A673 (cell line): ENCODE measurements at regions of chr20 and their contacts with region 1.

Region 1: DNA sequence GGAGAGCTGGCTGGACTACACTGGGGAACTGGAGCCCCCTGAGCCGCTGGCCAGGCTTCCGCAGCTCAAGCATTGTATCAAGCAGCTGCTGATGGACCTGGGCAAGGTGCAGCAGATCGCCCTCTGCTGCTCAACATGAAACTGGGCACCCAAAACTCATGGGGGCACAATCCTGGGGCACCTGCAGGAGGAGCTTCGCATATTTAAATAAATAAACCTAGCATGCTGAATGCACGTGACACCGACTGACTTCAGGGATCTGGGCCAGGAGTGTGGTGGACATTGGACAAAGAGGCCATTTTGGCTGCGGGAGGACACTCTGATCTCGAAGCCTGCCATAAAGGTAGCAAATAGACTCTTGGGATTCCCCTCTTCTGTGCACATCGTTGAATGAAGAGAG is 6.8 kb downstream of the SCAND1 start:
- DNase-seq: peak; percentile 55
- H3K4me3 ChIP-seq: no peak overlapping the region
- H3K27ac ChIP-seq: no peak overlapping the region
- H3K4me1 ChIP-seq: peaks cover 3% of the 10 kb centered on the region
- H3K27me3 ChIP-seq: no peaks in the 10 kb centered on the region
- CTCF ChIP-seq: peak; percentile 61

Region 2: GRCh38 chr20:35680452-35681183 is 266.9 kb before region 1 on chr20:
- CTCF ChIA-PET with region 1: interaction called, 7 read pairs
- POLR2A ChIA-PET with region 1: interaction called, 16 read pairs
- intact Hi-C with region 1: no loop called
- DNase-seq: no peak
- H3K4me3 ChIP-seq: no peak overlapping the region
- H3K27ac ChIP-seq: no peak overlapping the region
- H3K4me1 ChIP-seq: no peaks in the 10 kb centered on the region
- H3K27me3 ChIP-seq: no peaks in the 10 kb centered on the region
- CTCF ChIP-seq: no peak

Region 3: GRCh38 chr20:35871311-35871771 is 76.1 kb before region 1 on chr20:
- CTCF ChIA-PET with region 1: no interaction called
- POLR2A ChIA-PET with region 1: no interaction called
- intact Hi-C with region 1: no loop called
- DNase-seq: peak; percentile 54
- H3K4me3 ChIP-seq: peak overlapping the region; percentile 12
- H3K27ac ChIP-seq: peak overlapping the region; percentile 76
- H3K4me1 ChIP-seq: peaks cover 18% of the 10 kb centered on the region
- H3K27me3 ChIP-seq: no peaks in the 10 kb centered on the region
- CTCF ChIP-seq: no peak

Region 4: DNA sequence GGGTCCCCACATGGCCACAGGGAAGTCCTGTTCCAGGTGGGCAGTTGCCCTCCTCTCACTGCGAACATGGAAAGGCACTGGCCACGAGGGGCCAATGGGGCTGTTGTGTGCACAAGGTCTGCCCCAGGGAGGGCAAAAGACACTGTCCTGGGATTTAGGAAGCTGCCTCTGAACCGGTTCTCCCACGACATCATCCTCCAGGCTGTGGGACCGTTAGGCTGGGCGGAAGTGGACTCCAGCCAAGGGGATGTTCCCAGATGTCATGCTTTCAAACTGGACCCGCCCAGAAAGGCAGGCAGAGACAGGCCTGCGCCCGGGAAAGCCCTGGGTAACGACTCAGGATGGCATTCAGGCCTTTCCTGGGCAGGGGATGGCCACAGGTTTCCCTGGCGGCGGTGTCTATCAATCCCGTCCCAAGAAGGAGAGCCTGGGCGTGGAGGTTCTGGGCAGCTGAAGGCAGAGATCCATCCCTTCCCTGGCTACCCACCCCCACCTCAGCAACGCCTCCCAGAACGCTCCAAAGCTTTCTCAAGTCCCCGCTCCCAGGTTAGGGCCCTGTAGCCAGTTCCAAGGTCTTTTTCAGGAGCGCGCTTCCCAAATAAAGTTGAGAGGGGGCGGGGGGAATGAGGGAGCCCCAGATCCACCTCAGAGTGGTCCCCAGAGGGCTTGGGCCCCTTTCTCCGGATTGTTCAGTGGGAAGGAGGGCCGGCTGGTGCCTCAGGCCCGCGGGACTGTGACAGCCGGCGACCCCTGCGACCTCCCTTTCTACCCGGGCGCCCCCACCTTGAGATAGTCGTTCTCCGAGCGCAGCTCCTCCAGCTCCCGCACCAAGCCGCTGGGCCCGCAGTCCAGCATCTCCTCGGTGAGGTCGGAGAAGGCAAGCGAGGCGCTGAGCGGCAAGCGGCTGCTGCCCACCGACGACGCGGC is 914.6 kb after region 1 on chr20:
- CTCF ChIA-PET with region 1: no interaction called
- POLR2A ChIA-PET with region 1: no interaction called
- intact Hi-C with region 1: no loop called
- DNase-seq: peak; percentile 81
- H3K4me3 ChIP-seq: peak overlapping the region; percentile 59
- H3K27ac ChIP-seq: peak overlapping the region; percentile 72
- H3K4me1 ChIP-seq: peaks cover 16% of the 10 kb centered on the region
- H3K27me3 ChIP-seq: no peaks in the 10 kb centered on the region
- CTCF ChIP-seq: no peak

Region 5: DNA sequence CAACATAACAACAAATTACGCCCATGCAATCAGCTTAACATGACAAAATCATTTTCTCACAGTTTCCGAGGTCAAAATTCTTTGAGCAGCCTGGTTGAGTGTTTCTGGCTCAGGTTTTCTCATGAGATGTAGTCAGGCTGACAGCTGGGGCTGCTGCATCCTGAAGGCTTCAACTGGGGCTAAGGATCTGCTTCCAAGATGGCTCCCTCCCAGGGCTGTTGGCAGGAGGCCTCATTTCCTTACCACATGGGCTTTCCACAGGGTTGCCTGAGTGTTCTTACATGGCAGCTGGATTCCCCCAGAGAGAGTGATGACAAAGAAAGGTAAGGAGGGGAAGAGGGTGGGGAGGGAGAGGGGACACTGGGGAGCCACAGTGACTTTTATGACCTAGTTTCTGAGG is 1510.4 kb after region 1 on chr20:
- CTCF ChIA-PET with region 1: no interaction called
- POLR2A ChIA-PET with region 1: no interaction called
- intact Hi-C with region 1: no loop called
- DNase-seq: no peak
- H3K4me3 ChIP-seq: no peak overlapping the region
- H3K27ac ChIP-seq: no peak overlapping the region
- H3K4me1 ChIP-seq: no peaks in the 10 kb centered on the region
- H3K27me3 ChIP-seq: no peaks in the 10 kb centered on the region
- CTCF ChIP-seq: no peak